T-cell (primary cell): ENCODE measurements at regions of chr6 and their contacts with region 1.

Region 1: GRCh38 chr6:35507221-35507620 is 5.5 kb downstream of the TULP1 start:
- DNase-seq: no peak
- ATAC-seq: no peak
- H3K4me3 ChIP-seq: no peak overlapping the region
- H3K4me3 Mint-ChIP-seq: no peak overlapping the region
- H3K27ac ChIP-seq: no peak overlapping the region
- H3K27ac Mint-ChIP-seq: no peak overlapping the region
- H3K4me1 ChIP-seq: peaks cover 2 to 13% of the 10 kb centered on the region in 2 experiments
- H3K4me1 Mint-ChIP-seq: peaks cover 0 to 5% (median 2%) of the 10 kb centered on the region in 3 donors
- H3K27me3 ChIP-seq: peaks cover 2 to 49% of the 10 kb centered on the region in 2 experiments
- H3K27me3 Mint-ChIP-seq: peaks cover 6 to 31% of the 10 kb centered on the region in 2 donors

Region 2: GRCh38 chr6:35539223-35539622 is 32.0 kb after region 1 on chr6:
- CTCF ChIA-PET with region 1: no interaction called
- POLR2A ChIA-PET with region 1: interaction called in 1 of 2 experiments, 10 read pairs
- DNase-seq: no peak
- ATAC-seq: no peak
- H3K4me3 ChIP-seq: no peak overlapping the region
- H3K4me3 Mint-ChIP-seq: no peak overlapping the region
- H3K27ac ChIP-seq: no peak overlapping the region
- H3K27ac Mint-ChIP-seq: peak overlapping the region in 1 of 2 donors; percentile 49
- H3K4me1 ChIP-seq: peaks cover 3 to 5% of the 10 kb centered on the region in 2 experiments
- H3K4me1 Mint-ChIP-seq: peaks cover 7 to 18% (median 13%) of the 10 kb centered on the region in 3 donors
- H3K27me3 ChIP-seq: peaks cover 0 to 10% of the 10 kb centered on the region in 2 experiments
- H3K27me3 Mint-ChIP-seq: peaks cover 4 to 6% of the 10 kb centered on the region in 2 donors

Region 3: DNA sequence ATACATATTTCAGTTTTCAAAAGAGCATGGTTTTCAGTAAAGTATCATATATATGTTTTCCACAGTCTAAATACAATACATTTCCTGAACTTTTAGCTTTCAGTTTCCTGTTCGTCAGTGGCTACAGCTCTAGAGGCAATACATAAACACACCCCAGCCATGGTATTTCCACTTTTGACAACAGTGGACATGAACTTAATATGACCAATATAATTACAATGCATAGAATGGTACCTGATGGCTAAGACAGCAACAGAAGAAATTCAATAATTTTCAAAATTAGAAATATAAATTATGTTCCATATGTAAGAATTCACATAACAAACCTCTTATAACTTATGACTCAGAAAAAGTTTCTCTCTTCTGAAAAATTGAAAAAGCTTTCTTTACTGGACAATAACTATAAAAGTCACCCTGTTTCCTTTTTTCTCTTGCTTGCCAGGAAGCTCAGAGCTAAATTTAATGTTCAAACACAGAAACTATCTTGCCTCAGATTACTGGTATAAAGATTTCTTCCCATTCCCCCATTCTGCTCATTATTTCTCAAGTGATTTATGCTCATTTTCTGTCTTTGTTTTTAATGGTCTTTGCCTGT is 162.3 kb after region 1 on chr6:
- CTCF ChIA-PET with region 1: no interaction called
- POLR2A ChIA-PET with region 1: no interaction called
- DNase-seq: peak in 1 of 35 experiments; percentile 57
- ATAC-seq: peak; percentile 53 to 73 (median 70)
- H3K4me3 ChIP-seq: no peak overlapping the region
- H3K4me3 Mint-ChIP-seq: peak overlapping the region; percentile 66 to 73 (median 71)
- H3K27ac ChIP-seq: peak overlapping the region; percentile 77
- H3K27ac Mint-ChIP-seq: peak overlapping the region; percentile 96
- H3K4me1 ChIP-seq: peaks cover 45 to 52% of the 10 kb centered on the region in 2 experiments
- H3K4me1 Mint-ChIP-seq: peaks cover 46 to 68% (median 59%) of the 10 kb centered on the region in 3 donors
- H3K27me3 ChIP-seq: no peaks in the 10 kb centered on the region
- H3K27me3 Mint-ChIP-seq: no peaks in the 10 kb centered on the region